ENCODE measurements at regions of chr6 and their contacts with region 1.

Region 1: DNA sequence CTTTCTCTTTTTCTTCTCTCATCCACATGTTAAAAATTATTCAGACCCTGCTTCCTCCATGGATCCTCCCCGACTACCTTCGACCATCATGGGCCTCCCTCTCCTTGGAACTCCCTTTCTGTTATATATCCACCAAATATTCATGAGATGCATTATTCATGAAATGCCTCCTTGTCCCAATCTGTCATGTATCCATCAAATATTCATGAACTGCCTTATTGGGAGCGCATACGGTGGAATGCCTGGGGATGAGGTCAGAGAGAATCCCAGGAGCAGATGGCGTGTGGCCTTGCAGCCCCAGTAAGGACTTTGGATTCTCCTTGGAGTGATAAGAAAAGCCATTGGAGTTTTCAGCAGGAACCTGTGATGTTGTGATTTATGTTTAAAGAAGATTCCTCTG is 97.0 kb downstream of the NRN1 start:
- DNase-seq: no peak
- ATAC-seq: no peak
- H3K4me3 ChIP-seq: no peak overlapping the region
- H3K4me3 Mint-ChIP-seq: no peak overlapping the region
- H3K27ac ChIP-seq: no peak overlapping the region
- H3K27ac Mint-ChIP-seq: no peak overlapping the region
- H3K4me1 ChIP-seq: no peaks in the 10 kb centered on the region
- H3K4me1 Mint-ChIP-seq: no peaks in the 10 kb centered on the region
- H3K27me3 ChIP-seq: no peaks in the 10 kb centered on the region
- H3K27me3 Mint-ChIP-seq: peaks cover 4% of the 10 kb centered on the region
- CTCF ChIP-seq: no peak

Region 2: GRCh38 chr6:6152060-6152459 is 242.3 kb after region 1 on chr6:
- CTCF ChIA-PET with region 1: no interaction called
- POLR2A ChIA-PET with region 1: no interaction called
- intact Hi-C with region 1: loop called (anchors 5 kb)
- DNase-seq: no peak
- ATAC-seq: no peak
- H3K4me3 ChIP-seq: no peak overlapping the region
- H3K4me3 Mint-ChIP-seq: no peak overlapping the region
- H3K27ac ChIP-seq: no peak overlapping the region
- H3K27ac Mint-ChIP-seq: no peak overlapping the region
- H3K4me1 ChIP-seq: no peaks in the 10 kb centered on the region
- H3K4me1 Mint-ChIP-seq: no peaks in the 10 kb centered on the region
- H3K27me3 ChIP-seq: peaks cover 0 to 8% (median 3%) of the 10 kb centered on the region in 4 experiments
- H3K27me3 Mint-ChIP-seq: peaks cover 25% of the 10 kb centered on the region
- CTCF ChIP-seq: no peak

Measured in B cell (primary cell).